ENCODE measurements at regions of chr3 and their contacts with region 1.

Region 1: DNA sequence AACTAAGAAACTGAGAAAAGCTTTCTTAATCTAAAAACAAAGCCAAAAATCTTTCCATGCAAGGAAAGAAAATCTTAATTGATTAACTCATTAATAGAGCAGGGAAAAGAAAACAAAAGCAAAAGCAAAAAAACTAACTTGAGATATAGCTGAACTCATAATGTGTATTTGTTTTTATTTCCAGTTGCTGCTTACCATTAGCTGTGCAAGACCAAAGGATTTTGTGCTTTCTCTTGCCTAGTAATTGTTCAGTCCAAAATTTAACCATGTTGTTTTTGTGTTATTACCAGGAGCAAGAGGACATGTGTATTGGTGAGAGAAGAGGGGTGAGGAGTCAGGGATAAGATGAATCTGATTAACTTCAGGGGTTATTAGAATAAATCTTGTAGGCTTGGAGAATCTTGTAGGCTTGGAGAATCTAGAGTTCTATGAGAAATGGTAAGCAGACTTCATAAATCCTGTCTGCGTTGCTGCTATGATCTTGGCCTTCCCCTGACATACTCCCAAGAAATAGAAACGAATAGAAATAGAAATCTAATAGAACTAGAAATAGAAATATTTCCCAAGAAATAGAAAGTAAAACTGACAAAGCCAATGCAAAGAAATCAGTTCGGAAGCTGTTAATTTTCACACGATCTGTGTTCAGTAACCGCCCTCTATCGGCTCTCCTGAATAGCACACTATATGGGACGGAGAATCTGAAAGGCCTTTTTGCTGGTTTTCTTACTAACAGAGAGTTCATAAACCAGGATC is 72.6 kb upstream of the TNFSF10 start:
- DNase-seq: no peak
- ATAC-seq: peak; percentile 64 to 76
- H3K4me3 ChIP-seq: peak overlapping the region; percentile 66
- H3K27ac ChIP-seq: no peak overlapping the region
- H3K4me1 ChIP-seq: no peaks in the 10 kb centered on the region
- H3K27me3 ChIP-seq: no peaks in the 10 kb centered on the region

Region 2: DNA sequence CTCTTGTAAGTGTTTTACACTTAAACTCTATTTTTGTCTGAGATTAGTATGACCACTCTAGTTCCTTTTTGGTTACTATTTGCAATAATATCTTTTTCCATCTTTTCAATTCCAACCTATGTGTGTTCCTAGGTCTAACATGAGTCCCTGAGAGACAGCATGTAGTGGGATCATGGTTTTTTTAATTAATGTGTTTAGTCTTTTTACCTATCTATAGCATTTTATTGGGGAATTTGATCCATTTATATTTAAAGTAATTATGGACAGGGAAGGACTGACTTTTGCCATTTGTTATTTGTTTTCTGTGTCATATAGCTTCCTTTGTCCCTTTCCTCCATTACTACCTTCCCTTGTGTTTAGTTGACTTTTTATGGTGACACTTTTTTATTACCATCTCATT is 94.3 kb before region 1 on chr3:
- intact Hi-C with region 1: loop called in 1 of 4 experiments (anchors 10 kb)
- DNase-seq: no peak
- ATAC-seq: no peak
- H3K4me3 ChIP-seq: no peak overlapping the region
- H3K27ac ChIP-seq: no peak overlapping the region
- H3K4me1 ChIP-seq: no peaks in the 10 kb centered on the region
- H3K27me3 ChIP-seq: no peaks in the 10 kb centered on the region

Region 3: GRCh38 chr3:172511783-172512762 is 83.7 kb before region 1 on chr3:
- intact Hi-C with region 1: loop called in 1 of 4 experiments (anchors 10 kb)
- DNase-seq: peak; percentile 70 to 84 (median 83)
- ATAC-seq: peak; percentile 79 to 83
- H3K4me3 ChIP-seq: no peak overlapping the region
- H3K27ac ChIP-seq: no peak overlapping the region
- H3K4me1 ChIP-seq: peaks cover 11% of the 10 kb centered on the region
- H3K27me3 ChIP-seq: no peaks in the 10 kb centered on the region

Region 4: GRCh38 chr3:172627057-172627809 is 31.4 kb after region 1 on chr3:
- intact Hi-C with region 1: no loop called
- DNase-seq: no peak
- ATAC-seq: peak; percentile 32 to 57
- H3K4me3 ChIP-seq: no peak overlapping the region
- H3K27ac ChIP-seq: no peak overlapping the region
- H3K4me1 ChIP-seq: no peaks in the 10 kb centered on the region
- H3K27me3 ChIP-seq: no peaks in the 10 kb centered on the region

Region 5: GRCh38 chr3:172808969-172809546 is 213.2 kb after region 1 on chr3:
- intact Hi-C with region 1: no loop called
- DNase-seq: no peak
- ATAC-seq: no peak
- H3K4me3 ChIP-seq: no peak overlapping the region
- H3K27ac ChIP-seq: no peak overlapping the region
- H3K4me1 ChIP-seq: no peaks in the 10 kb centered on the region
- H3K27me3 ChIP-seq: no peaks in the 10 kb centered on the region

Region 6: GRCh38 chr3:172877011-172877410 is 281.2 kb after region 1 on chr3:
- intact Hi-C with region 1: no loop called
- DNase-seq: no peak
- ATAC-seq: peak in 1 of 2 donors; percentile 64
- H3K4me3 ChIP-seq: no peak overlapping the region
- H3K27ac ChIP-seq: no peak overlapping the region
- H3K4me1 ChIP-seq: no peaks in the 10 kb centered on the region
- H3K27me3 ChIP-seq: no peaks in the 10 kb centered on the region

Measured in right cardiac atrium (tissue), 5 donors.